Posterior vena cava (tissue), 2 donors: ENCODE measurements at regions of chr3 and their contacts with region 1.

Region 1: GRCh38 chr3:10349801-10350200 is 28.9 kb upstream of the SEC13 start:
- DNase-seq: peak; percentile 47

Region 2: GRCh38 chr3:10286596-10287330 is 63.0 kb before region 1 on chr3:
- intact Hi-C with region 1: no loop called
- DNase-seq: peak; percentile 85

Region 3: GRCh38 chr3:10322352-10322710 is 27.5 kb before region 1 on chr3:
- intact Hi-C with region 1: no loop called
- DNase-seq: no peak

Region 4: GRCh38 chr3:10459954-10460754 is 110.4 kb after region 1 on chr3:
- intact Hi-C with region 1: no loop called
- DNase-seq: no peak

Region 5: GRCh38 chr3:10492364-10493201 is 142.8 kb after region 1 on chr3:
- intact Hi-C with region 1: loop called in 1 of 2 experiments (anchors 5 kb)
- DNase-seq: no peak

Region 6: DNA sequence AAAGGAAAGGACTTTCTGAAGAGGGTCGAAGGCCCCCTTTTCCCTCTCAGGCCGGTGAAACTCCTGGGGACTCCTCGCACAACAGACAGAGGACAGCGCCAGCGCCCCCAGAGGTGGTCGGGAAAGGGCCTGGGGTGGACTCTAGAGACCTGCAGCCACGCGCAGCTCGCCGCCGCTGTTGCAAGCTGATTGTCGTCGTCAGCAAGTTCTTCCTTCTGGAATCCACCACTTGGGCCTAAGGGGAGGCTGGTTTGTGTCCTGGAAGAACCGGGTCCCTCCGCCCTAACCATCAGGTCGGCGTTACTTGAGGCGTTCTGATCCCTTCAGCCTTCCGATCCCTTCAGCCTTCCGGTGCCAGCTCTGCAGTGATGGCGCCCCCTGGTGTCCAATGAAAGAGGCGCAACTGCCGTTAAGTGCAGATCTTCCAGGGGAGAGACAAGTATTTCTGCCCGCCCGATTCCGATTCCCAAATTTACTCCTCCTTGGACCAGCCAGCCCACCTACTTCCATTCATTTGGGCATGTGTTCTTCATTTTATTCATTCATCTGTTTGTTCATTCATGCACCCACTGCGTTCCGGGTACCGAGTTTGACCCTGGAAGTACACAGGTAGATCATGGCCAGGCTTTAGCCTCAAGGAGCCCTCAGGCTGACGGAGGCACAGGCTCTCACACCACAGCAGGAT is 389.0 kb after region 1 on chr3:
- intact Hi-C with region 1: loop called (anchors 1 to 5 kb)
- DNase-seq: peak; percentile 91

Region 7: DNA sequence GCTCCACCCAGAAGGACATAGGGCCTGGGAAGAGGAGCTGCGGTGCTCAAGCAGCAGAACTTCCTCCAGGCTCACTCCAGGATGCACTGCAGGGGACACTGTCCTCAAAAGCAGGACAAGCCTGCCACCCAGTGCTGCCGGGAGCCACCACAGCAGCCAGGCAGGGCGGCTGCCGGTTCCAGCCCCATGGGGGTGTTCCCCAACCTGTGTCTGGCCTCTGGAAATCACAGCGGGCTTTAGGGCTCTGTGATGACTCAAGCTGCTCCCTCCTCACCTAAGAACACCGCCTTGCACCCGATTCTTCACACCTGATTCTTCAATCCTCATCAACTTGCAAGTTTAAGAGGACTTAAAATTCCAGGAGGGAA is 394.3 kb after region 1 on chr3:
- intact Hi-C with region 1: loop called in 1 of 2 experiments (anchors 5 kb)
- DNase-seq: no peak